CD4-positive, alpha-beta memory T cell (primary cell): ENCODE measurements at regions of chr11 and their contacts with region 1.

Region 1: GRCh38 chr11:57800444-57801182 is 39.0 kb downstream of the CTNND1 start:
- DNase-seq: peak in 4 of 5 donors; percentile 57 to 65 (median 64)
- H3K4me3 ChIP-seq: no peak overlapping the region
- H3K4me3 Mint-ChIP-seq: peak overlapping the region in 6 of 8 donors; percentile 7 to 69 (median 22)
- H3K27ac ChIP-seq: peak overlapping the region; percentile 24
- H3K27ac Mint-ChIP-seq: peak overlapping the region; percentile 65 to 94 (median 89)
- H3K4me1 ChIP-seq: peaks cover 27% of the 10 kb centered on the region
- H3K4me1 Mint-ChIP-seq: peaks cover 10 to 29% (median 21%) of the 10 kb centered on the region in 4 donors
- H3K27me3 ChIP-seq: no peaks in the 10 kb centered on the region
- H3K27me3 Mint-ChIP-seq: no peaks in the 10 kb centered on the region

Region 2: DNA sequence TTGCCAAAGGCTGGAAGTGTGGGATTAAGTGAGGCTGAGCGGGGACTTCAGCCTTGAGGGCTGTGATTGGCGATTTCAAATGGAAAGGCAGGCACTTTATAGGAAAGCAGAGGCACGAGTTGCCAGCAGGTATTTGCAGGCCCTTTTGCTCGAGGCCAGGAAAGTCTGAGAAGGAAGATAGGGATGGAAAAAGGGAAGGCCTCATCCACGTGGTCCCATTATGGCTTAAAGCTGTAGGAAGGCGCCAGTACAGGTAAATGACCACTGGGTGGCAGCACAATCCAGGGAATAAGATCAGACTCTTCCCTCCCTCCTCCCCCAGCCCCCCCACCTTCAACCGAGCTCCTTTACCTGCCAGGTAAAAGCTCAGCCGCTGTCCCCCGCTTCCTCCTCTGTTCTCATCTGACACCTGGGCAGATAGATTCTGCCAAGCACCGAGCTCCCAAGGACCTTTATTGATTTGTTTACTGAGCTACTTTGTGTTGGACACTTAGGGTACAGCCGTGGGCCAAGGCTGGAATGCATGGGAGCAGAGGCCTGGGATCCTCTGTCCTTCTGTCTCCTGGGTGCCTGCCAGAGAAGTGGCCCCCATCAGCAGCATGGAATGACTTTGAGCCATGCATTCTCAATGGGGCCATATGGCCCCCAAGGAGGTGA is 454.9 kb before region 1 on chr11:
- CTCF ChIA-PET with region 1: interaction called, 8 read pairs
- POLR2A ChIA-PET with region 1: no interaction called
- intact Hi-C with region 1: loop called (anchors 5 kb)
- DNase-seq: peak; percentile 59 to 74 (median 63)
- H3K4me3 ChIP-seq: no peak overlapping the region
- H3K4me3 Mint-ChIP-seq: no peak overlapping the region
- H3K27ac ChIP-seq: no peak overlapping the region
- H3K27ac Mint-ChIP-seq: no peak overlapping the region
- H3K4me1 ChIP-seq: peaks cover 4% of the 10 kb centered on the region
- H3K4me1 Mint-ChIP-seq: peaks cover 0 to 5% (median 3%) of the 10 kb centered on the region in 4 donors
- H3K27me3 ChIP-seq: no peaks in the 10 kb centered on the region
- H3K27me3 Mint-ChIP-seq: peaks cover 2% of the 10 kb centered on the region in 2 donors

Region 3: DNA sequence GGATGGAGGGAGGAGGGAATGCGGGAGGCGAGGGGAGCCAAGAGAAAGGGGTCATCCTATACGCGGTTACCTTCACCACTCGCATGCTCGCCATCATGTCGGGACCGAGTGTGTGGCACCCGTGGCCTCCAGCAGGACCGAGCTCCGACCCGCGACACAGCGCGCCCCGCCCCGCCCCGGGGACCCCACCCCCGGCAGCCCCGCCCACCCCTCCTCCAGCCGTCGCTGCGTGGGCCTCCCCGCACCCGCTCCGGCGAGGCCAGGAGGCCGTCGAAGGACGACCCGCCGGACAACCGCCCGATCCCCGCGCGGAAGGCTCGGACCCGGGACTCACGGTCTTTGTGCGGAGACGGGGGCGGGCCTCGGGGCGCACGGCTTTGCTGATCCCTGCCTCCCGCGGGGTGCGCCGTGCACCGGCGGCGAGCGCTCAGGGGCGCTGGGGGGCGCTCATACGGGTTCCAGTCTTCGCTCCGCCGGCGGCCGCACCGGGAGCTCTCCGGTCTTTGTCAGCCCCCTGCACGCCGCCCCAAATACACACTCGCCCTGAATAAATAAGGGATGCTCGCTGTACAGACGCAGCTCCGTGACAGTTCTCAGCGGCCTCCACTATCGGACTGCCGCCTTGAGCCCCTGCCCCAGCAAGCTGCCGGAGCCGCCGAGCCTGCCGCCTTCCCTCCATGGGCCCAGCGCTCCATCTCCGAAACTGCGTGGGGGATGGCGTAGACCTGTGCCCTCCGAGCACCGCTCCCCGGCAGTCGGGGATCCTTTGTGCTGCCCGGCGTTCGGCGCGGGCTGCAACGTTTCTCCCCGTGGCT is 232.9 kb before region 1 on chr11 and contains the start of gene UBE2L6:
- CTCF ChIA-PET with region 1: interaction called, 74 read pairs
- POLR2A ChIA-PET with region 1: interaction called, 12 read pairs
- intact Hi-C with region 1: loop called (anchors 1 kb)
- DNase-seq: peak; percentile 59 to 86 (median 66)
- H3K4me3 ChIP-seq: peak within 1 kb of the TSS; percentile 72 to 81
- H3K4me3 Mint-ChIP-seq: peak within 1 kb of the TSS; percentile 94 to 100 (median 99)
- H3K27ac ChIP-seq: peak within 1 kb of the TSS; percentile 93
- H3K27ac Mint-ChIP-seq: peak within 1 kb of the TSS; percentile 97 to 99 (median 98)
- H3K4me1 ChIP-seq: peaks cover 34% of the 10 kb centered on the region
- H3K4me1 Mint-ChIP-seq: peaks cover 27 to 65% (median 42%) of the 10 kb centered on the region in 4 donors
- H3K27me3 ChIP-seq: no peaks in the 10 kb centered on the region
- H3K27me3 Mint-ChIP-seq: no peaks in the 10 kb centered on the region
- total RNA-seq, gene UBE2L6: 79.7 to 82.9 TPM

Region 4: GRCh38 chr11:57657194-57658022 is 143.2 kb before region 1 on chr11 and contains the start of gene CLP1:
- CTCF ChIA-PET with region 1: interaction called, 11 read pairs
- POLR2A ChIA-PET with region 1: interaction called, 5 read pairs
- intact Hi-C with region 1: loop called (anchors 1 kb)
- DNase-seq: peak; percentile 98 to 99 (median 98)
- H3K4me3 ChIP-seq: peak within 1 kb of the TSS; percentile 91 to 96
- H3K4me3 Mint-ChIP-seq: peak within 1 kb of the TSS; percentile 94 to 100 (median 98)
- H3K27ac ChIP-seq: peak within 1 kb of the TSS; percentile 84
- H3K27ac Mint-ChIP-seq: peak within 1 kb of the TSS; percentile 86 to 100 (median 97)
- H3K4me1 ChIP-seq: peaks cover 16% of the 10 kb centered on the region
- H3K4me1 Mint-ChIP-seq: peaks cover 15 to 30% (median 27%) of the 10 kb centered on the region in 4 donors
- H3K27me3 ChIP-seq: no peaks in the 10 kb centered on the region
- H3K27me3 Mint-ChIP-seq: no peaks in the 10 kb centered on the region
- total RNA-seq, gene CLP1: 14.1 to 16.0 TPM

Region 5: DNA sequence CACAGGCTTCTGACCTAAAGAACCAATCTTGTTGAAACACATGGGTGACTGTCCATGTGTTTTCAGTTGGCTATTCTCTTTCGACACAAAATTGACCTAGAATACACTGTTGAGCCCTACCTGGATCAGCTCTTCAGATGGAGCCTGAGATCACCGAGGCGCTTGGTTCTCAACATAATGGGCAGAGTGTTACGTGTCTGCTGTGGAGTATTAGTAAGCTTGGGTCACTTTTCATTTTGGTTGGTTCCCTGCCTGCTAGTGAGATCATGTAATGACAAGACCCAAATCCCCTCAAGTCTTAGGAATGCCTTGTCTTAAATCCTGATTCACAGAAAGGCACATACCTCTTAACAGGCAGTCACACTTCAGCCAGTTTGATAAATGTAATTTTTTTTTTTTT is 97.3 kb before region 1 on chr11:
- CTCF ChIA-PET with region 1: interaction called, 30 read pairs
- POLR2A ChIA-PET with region 1: no interaction called
- intact Hi-C with region 1: no loop called
- DNase-seq: no peak
- H3K4me3 ChIP-seq: no peak overlapping the region
- H3K4me3 Mint-ChIP-seq: no peak overlapping the region
- H3K27ac ChIP-seq: no peak overlapping the region
- H3K27ac Mint-ChIP-seq: peak overlapping the region in 1 of 7 donors; percentile 43
- H3K4me1 ChIP-seq: no peaks in the 10 kb centered on the region
- H3K4me1 Mint-ChIP-seq: peaks cover 3 to 6% (median 4%) of the 10 kb centered on the region in 4 donors
- H3K27me3 ChIP-seq: no peaks in the 10 kb centered on the region
- H3K27me3 Mint-ChIP-seq: no peaks in the 10 kb centered on the region

Region 6: GRCh38 chr11:57741132-57742086 is 59.2 kb before region 1 on chr11 and contains the start of gene SELENOH:
- CTCF ChIA-PET with region 1: interaction called, 143 read pairs
- POLR2A ChIA-PET with region 1: interaction called, 21 read pairs
- intact Hi-C with region 1: loop called (anchors 1 kb)
- DNase-seq: peak; percentile 90 to 96 (median 91)
- H3K4me3 ChIP-seq: peak within 1 kb of the TSS; percentile 77 to 80
- H3K4me3 Mint-ChIP-seq: peak within 1 kb of the TSS; percentile 90 to 100 (median 98)
- H3K27ac ChIP-seq: peak within 1 kb of the TSS; percentile 82
- H3K27ac Mint-ChIP-seq: peak within 1 kb of the TSS; percentile 96 to 100 (median 99)
- H3K4me1 ChIP-seq: peaks cover 26% of the 10 kb centered on the region
- H3K4me1 Mint-ChIP-seq: peaks cover 18 to 36% (median 28%) of the 10 kb centered on the region in 4 donors
- H3K27me3 ChIP-seq: no peaks in the 10 kb centered on the region
- H3K27me3 Mint-ChIP-seq: no peaks in the 10 kb centered on the region
- total RNA-seq, gene SELENOH: 102 to 113 TPM

Region 7: DNA sequence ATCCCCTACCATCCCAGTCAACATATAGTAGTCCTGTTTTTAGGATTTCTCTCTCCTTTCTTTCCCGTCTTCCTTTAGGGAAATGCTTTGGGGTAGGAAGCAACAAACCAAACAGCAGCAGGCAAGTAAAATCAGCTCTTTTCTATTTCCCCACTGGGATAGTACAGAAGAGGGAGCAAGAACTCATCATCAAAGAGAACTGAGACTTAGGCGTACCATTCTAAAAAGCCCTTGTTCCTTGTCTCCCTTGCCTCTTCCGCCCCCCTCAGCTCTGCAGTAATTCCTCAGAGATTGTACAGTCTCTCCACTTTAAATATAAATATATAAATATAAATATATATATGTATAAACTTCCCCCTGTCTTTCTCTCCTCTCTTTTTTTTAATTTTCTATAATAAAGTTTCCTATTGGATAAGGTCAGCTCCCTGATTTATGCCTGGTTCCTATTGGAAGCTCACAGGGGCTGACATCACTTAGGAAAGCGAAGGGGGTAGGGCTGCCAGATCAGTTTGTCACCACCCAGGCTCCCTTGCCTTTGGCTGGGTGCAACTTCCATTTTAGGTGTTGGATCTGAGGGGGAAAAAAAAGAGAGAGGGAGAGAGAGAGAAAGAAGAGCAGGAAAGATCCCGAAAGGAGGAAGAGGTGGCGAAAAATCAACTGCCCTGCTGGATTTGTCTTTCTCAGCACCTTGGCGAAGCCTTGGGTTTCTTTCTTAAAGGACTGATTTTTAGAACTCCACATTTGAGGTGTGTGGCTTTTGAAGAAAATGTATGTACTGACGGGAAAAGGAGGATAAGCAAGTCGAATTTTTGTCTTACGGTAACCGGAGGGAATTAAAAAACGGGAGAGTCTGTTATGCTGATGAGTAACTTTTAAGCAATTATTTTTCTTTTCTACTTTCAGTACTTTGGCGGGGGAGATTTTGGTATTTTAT is 39.0 kb before region 1 on chr11 and contains the start of gene CTNND1:
- CTCF ChIA-PET with region 1: interaction called, 44 read pairs
- POLR2A ChIA-PET with region 1: interaction called, 3 read pairs
- intact Hi-C with region 1: no loop called
- DNase-seq: no peak
- H3K4me3 ChIP-seq: no peak within 1 kb of the TSS
- H3K4me3 Mint-ChIP-seq: peak within 1 kb of the TSS in 1 of 8 donors; percentile 52
- H3K27ac ChIP-seq: no peak within 1 kb of the TSS
- H3K27ac Mint-ChIP-seq: peak within 1 kb of the TSS in 1 of 7 donors; percentile 19
- H3K4me1 ChIP-seq: no peaks in the 10 kb centered on the region
- H3K4me1 Mint-ChIP-seq: peaks cover 0 to 1% (median 0%) of the 10 kb centered on the region in 4 donors
- H3K27me3 ChIP-seq: no peaks in the 10 kb centered on the region
- H3K27me3 Mint-ChIP-seq: peaks cover 0 to 1% of the 10 kb centered on the region in 2 donors
- total RNA-seq, gene CTNND1: 10.3 to 11.1 TPM

Region 8: DNA sequence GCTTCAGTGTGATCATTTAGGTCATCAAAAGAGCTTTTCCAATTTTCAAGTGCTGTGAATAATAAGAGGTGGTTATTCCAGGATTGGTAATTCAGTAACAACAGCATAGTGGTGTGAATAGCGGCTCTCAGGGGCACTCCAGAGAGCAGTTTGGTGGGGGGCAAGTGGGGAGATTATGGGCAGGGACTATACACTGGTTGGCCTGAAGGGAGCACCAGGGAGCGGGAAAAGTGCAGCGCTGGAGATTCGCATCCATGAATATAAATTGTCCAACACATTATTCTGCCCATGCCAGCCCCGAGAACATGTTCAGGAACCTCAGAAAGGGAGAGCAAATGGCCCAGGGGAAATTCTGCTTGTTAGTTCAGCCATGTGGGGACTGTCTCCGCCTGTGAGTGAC is 268.0 kb after region 1 on chr11:
- CTCF ChIA-PET with region 1: no interaction called
- POLR2A ChIA-PET with region 1: no interaction called
- intact Hi-C with region 1: no loop called
- DNase-seq: no peak
- H3K4me3 ChIP-seq: no peak overlapping the region
- H3K4me3 Mint-ChIP-seq: no peak overlapping the region
- H3K27ac ChIP-seq: no peak overlapping the region
- H3K27ac Mint-ChIP-seq: no peak overlapping the region
- H3K4me1 ChIP-seq: no peaks in the 10 kb centered on the region
- H3K4me1 Mint-ChIP-seq: no peaks in the 10 kb centered on the region
- H3K27me3 ChIP-seq: no peaks in the 10 kb centered on the region
- H3K27me3 Mint-ChIP-seq: peaks cover 1 to 2% of the 10 kb centered on the region in 2 donors